GM12878 (cell line): ENCODE measurements at regions of chr13 and their contacts with region 1.

Region 1: GRCh38 chr13:40982772-40983171 is 36.3 kb downstream of the ELF1 start:
- DNase-seq: peak; percentile 84
- ATAC-seq: peak; percentile 53
- H3K4me3 ChIP-seq: peak overlapping the region; percentile 16; the same call in 1 of the 2 replicates
- H3K27ac ChIP-seq: peak overlapping the region; percentile 82
- H3K4me1 ChIP-seq: peaks cover 16% of the 10 kb centered on the region
- H3K27me3 ChIP-seq: no peaks in the 10 kb centered on the region
- CTCF ChIP-seq: no peak
- EP300 ChIP-seq: peak; percentile 22 to 59; a peak in 1 of 4 replicates
- POLR2A ChIP-seq: no peak
- RAD21 ChIP-seq: no peak

Region 2: DNA sequence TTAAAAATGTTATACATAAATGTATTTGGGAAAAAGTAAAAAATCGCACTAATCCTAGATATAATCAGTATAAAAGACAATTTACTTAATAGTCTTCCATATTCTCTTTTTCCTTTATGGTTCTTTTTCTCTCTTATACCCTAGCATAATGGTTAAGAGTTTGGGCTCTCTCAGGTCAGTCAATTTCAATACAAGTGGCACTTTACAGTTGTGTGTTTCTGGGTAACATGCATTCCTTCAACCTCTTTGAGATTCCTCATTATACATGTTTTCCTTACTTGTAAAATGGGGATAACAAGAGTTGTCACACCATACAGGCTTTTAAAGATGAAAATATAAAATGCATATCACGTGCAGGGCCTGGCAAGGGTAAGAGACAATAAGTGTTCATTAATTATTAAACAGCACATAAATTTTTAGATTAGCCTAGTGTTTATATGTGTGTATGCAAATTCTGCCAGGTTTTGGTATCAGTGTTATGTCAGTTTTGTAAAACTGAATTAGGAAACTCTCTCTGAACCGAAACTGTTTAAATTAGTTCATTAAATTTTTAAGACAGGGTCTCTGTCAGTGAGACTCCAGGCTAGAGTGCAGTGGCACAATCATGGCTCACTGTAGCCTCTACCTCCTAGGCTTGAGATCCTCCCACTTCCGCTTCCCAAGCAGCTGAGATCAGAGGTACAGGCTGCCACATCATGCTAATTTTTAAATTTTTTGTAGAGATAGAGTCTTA is 13.4 kb before region 1 on chr13:
- CTCF ChIA-PET with region 1: interaction called, 160 read pairs
- POLR2A ChIA-PET with region 1: interaction called, 8 read pairs
- RAD21 ChIA-PET with region 1: interaction called, 36 read pairs
- SMC1A ChIA-PET with region 1: interaction called, 92 read pairs
- in situ Hi-C with region 1: no loop called
- intact Hi-C with region 1: no loop called
- DNase-seq: no peak
- ATAC-seq: peak; percentile 71
- H3K4me3 ChIP-seq: no peak overlapping the region
- H3K27ac ChIP-seq: peak overlapping the region; percentile 20; the same call in 1 of the 2 replicates
- H3K4me1 ChIP-seq: peaks cover 50% of the 10 kb centered on the region
- H3K27me3 ChIP-seq: no peaks in the 10 kb centered on the region
- CTCF ChIP-seq: no peak
- EP300 ChIP-seq: no peak; a peak in 1 of 4 replicates
- POLR2A ChIP-seq: no peak
- RAD21 ChIP-seq: no peak

Region 3: GRCh38 chr13:40992678-40993518 is 10.1 kb after region 1 on chr13:
- CTCF ChIA-PET with region 1: interaction called, 160 read pairs
- POLR2A ChIA-PET with region 1: interaction called, 7 read pairs
- RAD21 ChIA-PET with region 1: interaction called, 14 read pairs
- SMC1A ChIA-PET with region 1: interaction called, 29 read pairs
- in situ Hi-C with region 1: no loop called
- intact Hi-C with region 1: no loop called
- DNase-seq: no peak
- ATAC-seq: peak; percentile 34
- H3K4me3 ChIP-seq: no peak overlapping the region; the same call in 1 of the 2 replicates
- H3K27ac ChIP-seq: peak overlapping the region; percentile 92
- H3K4me1 ChIP-seq: peaks cover 46% of the 10 kb centered on the region
- H3K27me3 ChIP-seq: no peaks in the 10 kb centered on the region
- CTCF ChIP-seq: peak; percentile 10 to 49 (median 12); a peak in 4 of 6 replicates
- EP300 ChIP-seq: no peak
- POLR2A ChIP-seq: no peak
- RAD21 ChIP-seq: peak; percentile 51

Region 4: DNA sequence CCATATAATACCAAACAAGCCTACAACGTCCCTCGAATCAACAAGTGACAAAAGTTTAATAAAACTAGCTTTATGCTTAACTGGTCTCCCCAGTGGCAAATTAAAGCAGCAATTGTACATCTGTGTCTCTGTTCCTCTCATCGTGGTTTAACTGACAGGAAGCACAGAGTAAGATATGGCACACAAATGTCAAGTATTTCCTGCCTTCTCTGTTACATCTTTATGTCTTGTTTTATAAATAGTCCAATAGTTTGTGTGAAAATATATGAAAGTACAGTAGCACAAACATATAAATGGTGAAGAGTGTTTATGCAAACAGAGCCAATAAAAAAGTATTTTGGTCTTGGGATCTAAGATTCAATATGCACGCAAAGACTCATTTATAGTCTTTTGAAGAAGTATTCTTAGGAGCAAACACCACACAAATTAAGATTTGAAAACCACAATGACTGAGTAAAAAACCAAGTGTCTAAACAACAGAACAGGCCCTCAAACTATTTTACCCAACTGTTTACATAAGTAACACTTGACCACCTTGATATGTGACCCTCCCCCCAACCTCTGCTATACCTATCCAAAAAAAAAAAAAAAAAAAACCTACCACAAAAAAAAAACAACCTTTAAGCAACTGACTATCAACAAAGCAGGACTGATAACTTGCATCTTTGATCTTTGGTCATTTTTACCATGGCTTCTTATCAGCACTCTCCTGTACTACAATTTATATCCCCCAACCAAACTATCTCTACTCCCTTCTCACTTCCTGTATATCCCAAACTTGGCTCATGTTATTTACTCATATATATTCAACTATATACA is 22.3 kb after region 1 on chr13:
- CTCF ChIA-PET with region 1: interaction called, 8 read pairs
- POLR2A ChIA-PET with region 1: interaction called, 6 read pairs
- RAD21 ChIA-PET with region 1: interaction called, 39 read pairs
- SMC1A ChIA-PET with region 1: interaction called, 308 read pairs
- in situ Hi-C with region 1: no loop called
- intact Hi-C with region 1: loop called (anchors 2 kb)
- DNase-seq: peak; percentile 79
- ATAC-seq: peak; percentile 72
- H3K4me3 ChIP-seq: peak overlapping the region; percentile 18; the same call in 1 of the 2 replicates
- H3K27ac ChIP-seq: peak overlapping the region; percentile 78
- H3K4me1 ChIP-seq: peaks cover 53% of the 10 kb centered on the region
- H3K27me3 ChIP-seq: no peaks in the 10 kb centered on the region
- CTCF ChIP-seq: no peak
- EP300 ChIP-seq: peak; percentile 80 to 83
- POLR2A ChIP-seq: no peak
- RAD21 ChIP-seq: 0 out of 2 replicates have a peak, but pooled peaks have one; percentile 7

Region 5: DNA sequence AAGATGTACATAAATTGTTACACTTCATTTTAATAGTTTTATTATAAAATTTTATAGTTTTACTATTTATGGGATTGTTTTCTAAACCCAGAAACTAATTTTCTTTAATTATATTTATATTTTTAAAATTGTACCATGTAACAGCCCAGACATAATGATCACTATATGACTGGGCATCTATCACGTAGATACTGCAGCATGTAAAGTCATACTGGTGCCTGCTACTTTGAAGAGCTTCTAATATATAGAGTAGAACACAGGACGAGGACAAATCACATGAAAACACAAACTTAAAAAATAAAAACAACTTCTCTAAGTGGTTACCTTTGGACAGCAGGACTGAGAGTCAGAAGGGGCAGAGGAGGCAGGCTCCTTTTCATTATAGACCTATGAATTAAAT is 31.1 kb after region 1 on chr13:
- CTCF ChIA-PET with region 1: interaction called, 8 read pairs
- POLR2A ChIA-PET with region 1: interaction called, 45 read pairs
- RAD21 ChIA-PET with region 1: interaction called, 39 read pairs
- SMC1A ChIA-PET with region 1: interaction called, 308 read pairs
- in situ Hi-C with region 1: no loop called
- intact Hi-C with region 1: loop called (anchors 2 kb)
- DNase-seq: no peak
- ATAC-seq: peak; percentile 46
- H3K4me3 ChIP-seq: peak overlapping the region; percentile 75
- H3K27ac ChIP-seq: no peak overlapping the region
- H3K4me1 ChIP-seq: peaks cover 18% of the 10 kb centered on the region
- H3K27me3 ChIP-seq: no peaks in the 10 kb centered on the region
- CTCF ChIP-seq: no peak
- EP300 ChIP-seq: no peak
- POLR2A ChIP-seq: no peak
- RAD21 ChIP-seq: no peak

Region 6: GRCh38 chr13:41019011-41019487 is 36.3 kb after region 1 on chr13 and contains the start of gene ELF1:
- CTCF ChIA-PET with region 1: interaction called, 7 read pairs
- POLR2A ChIA-PET with region 1: interaction called, 45 read pairs
- RAD21 ChIA-PET with region 1: interaction called, 18 read pairs
- SMC1A ChIA-PET with region 1: interaction called, 308 read pairs
- in situ Hi-C with region 1: no loop called
- intact Hi-C with region 1: loop called (anchors 2 kb)
- DNase-seq: peak; percentile 88
- ATAC-seq: peak; percentile 79
- H3K4me3 ChIP-seq: peak within 1 kb of the TSS; percentile 90
- H3K27ac ChIP-seq: peak within 1 kb of the TSS; percentile 100
- H3K4me1 ChIP-seq: peaks cover 7% of the 10 kb centered on the region
- H3K27me3 ChIP-seq: no peaks in the 10 kb centered on the region
- CTCF ChIP-seq: no peak
- EP300 ChIP-seq: peak; percentile 78 to 95
- POLR2A ChIP-seq: peak; percentile 47
- RAD21 ChIP-seq: 0 out of 2 replicates have a peak, but pooled peaks have one; percentile 13
- polyA plus RNA-seq, gene ELF1: 43.3 to 43.5 TPM